BJ (cell line): ENCODE measurements at regions of chr3 and their contacts with region 1.

Region 1: GRCh38 chr3:184229394-184230080 is at the start of gene VWA5B2:
- DNase-seq: no peak
- H3K4me3 ChIP-seq: peak within 1 kb of the TSS; percentile 25
- H3K27me3 ChIP-seq: peaks cover 42% of the 10 kb centered on the region
- CTCF ChIP-seq: no peak
- polyA plus RNA-seq, gene VWA5B2: not detected in 2 replicates

Region 2: GRCh38 chr3:183548262-183548769 is 681.2 kb before region 1 on chr3:
- CTCF ChIA-PET with region 1: no interaction called
- POLR2A ChIA-PET with region 1: no interaction called
- DNase-seq: peak; percentile 13
- H3K4me3 ChIP-seq: no peak overlapping the region
- H3K27me3 ChIP-seq: no peaks in the 10 kb centered on the region
- CTCF ChIP-seq: no peak

Region 3: GRCh38 chr3:183895296-183895695 is 334.2 kb before region 1 on chr3:
- CTCF ChIA-PET with region 1: interaction called, 13 read pairs
- POLR2A ChIA-PET with region 1: no interaction called
- DNase-seq: no peak
- H3K4me3 ChIP-seq: no peak overlapping the region
- H3K27me3 ChIP-seq: peaks cover 3% of the 10 kb centered on the region; the same call in 1 of the 2 replicates
- CTCF ChIP-seq: peak; percentile 84

Region 4: GRCh38 chr3:184145111-184145524 is 84.4 kb before region 1 on chr3:
- CTCF ChIA-PET with region 1: interaction called, 10 read pairs
- POLR2A ChIA-PET with region 1: no interaction called
- DNase-seq: no peak
- H3K4me3 ChIP-seq: no peak overlapping the region
- H3K27me3 ChIP-seq: no peaks in the 10 kb centered on the region
- CTCF ChIP-seq: peak; percentile 49

Region 5: DNA sequence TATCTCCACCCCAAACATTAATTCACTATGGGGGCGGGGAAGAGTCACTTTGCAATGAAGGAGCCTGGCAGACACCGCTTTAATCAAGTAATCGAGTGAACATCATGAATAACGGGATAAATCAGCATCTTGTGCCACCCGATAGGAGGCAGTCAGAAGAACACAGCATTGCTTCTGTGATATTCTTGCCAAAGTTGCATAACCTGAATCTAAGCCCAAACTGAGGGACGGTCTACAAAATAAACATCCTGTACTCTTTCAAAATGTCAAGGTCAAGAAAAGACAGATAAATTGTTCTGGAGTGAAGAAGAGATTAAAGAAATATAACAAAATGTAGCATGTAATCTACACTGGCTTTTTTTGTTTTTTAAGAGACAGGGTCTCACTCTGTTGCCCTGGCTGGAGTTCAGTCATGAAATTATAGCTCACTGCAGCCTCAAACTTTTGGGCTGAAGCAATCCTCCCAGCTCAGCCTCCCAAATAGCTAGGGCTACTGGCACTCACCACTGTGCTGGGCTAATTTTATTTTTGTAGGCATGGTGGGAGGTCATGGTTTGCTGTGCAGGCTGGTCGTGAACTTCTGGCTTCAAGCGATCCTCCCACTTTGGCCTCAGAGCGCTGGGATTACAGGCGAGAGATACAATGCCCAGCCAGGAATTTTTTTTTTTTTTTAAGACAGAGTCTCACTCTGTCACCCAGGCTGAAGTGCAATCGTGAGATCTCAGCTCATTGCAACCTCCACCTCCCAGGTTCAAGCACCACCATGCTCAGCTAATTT is 20.2 kb before region 1 on chr3:
- CTCF ChIA-PET with region 1: interaction called, 29 read pairs
- POLR2A ChIA-PET with region 1: no interaction called
- DNase-seq: no peak
- H3K4me3 ChIP-seq: no peak overlapping the region
- H3K27me3 ChIP-seq: peaks cover 5% of the 10 kb centered on the region; the same call in 1 of the 2 replicates
- CTCF ChIP-seq: no peak

Region 6: GRCh38 chr3:184218814-184219213 is 10.7 kb before region 1 on chr3:
- CTCF ChIA-PET with region 1: interaction called, 29 read pairs
- POLR2A ChIA-PET with region 1: no interaction called
- DNase-seq: no peak
- H3K4me3 ChIP-seq: no peak overlapping the region
- H3K27me3 ChIP-seq: peaks cover 2% of the 10 kb centered on the region; the same call in 1 of the 2 replicates
- CTCF ChIP-seq: no peak

Region 7: GRCh38 chr3:184241447-184242296 is 12.1 kb after region 1 on chr3:
- CTCF ChIA-PET with region 1: interaction called, 54 read pairs
- POLR2A ChIA-PET with region 1: no interaction called
- DNase-seq: no peak
- H3K4me3 ChIP-seq: no peak overlapping the region
- H3K27me3 ChIP-seq: no peaks in the 10 kb centered on the region; the same call in 1 of the 2 replicates
- CTCF ChIP-seq: peak; percentile 53

Region 8: DNA sequence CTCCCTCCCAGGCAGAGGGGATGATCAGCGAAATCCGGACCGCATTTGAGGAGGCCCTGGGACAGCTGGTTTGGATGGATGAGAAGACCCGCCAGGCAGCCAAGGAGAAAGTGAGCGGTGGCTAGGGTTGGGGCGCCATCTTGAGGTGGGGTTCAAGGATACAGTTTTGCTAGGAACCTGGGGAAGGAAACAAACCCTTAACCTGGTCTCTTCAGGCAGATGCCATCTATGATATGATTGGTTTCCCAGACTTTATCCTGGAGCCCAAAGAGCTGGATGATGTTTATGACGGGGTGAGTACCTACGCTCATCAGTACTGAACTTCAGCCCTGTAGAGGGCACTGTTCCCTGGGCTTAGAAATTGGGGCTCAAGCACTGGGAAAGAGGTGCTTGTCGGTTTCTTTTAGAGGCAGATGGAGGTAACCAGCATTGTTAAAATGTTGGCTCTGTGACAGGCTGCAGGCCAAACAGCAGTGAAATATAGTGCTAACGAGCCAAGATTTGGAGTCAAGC is 59.9 kb after region 1 on chr3:
- CTCF ChIA-PET with region 1: interaction called, 13 read pairs
- POLR2A ChIA-PET with region 1: no interaction called
- DNase-seq: no peak
- H3K4me3 ChIP-seq: no peak overlapping the region
- H3K27me3 ChIP-seq: peaks cover 5% of the 10 kb centered on the region; the same call in 1 of the 2 replicates
- CTCF ChIP-seq: peak; percentile 79